ENCODE measurements at regions of chr1 and their contacts with region 1.

Region 1: DNA sequence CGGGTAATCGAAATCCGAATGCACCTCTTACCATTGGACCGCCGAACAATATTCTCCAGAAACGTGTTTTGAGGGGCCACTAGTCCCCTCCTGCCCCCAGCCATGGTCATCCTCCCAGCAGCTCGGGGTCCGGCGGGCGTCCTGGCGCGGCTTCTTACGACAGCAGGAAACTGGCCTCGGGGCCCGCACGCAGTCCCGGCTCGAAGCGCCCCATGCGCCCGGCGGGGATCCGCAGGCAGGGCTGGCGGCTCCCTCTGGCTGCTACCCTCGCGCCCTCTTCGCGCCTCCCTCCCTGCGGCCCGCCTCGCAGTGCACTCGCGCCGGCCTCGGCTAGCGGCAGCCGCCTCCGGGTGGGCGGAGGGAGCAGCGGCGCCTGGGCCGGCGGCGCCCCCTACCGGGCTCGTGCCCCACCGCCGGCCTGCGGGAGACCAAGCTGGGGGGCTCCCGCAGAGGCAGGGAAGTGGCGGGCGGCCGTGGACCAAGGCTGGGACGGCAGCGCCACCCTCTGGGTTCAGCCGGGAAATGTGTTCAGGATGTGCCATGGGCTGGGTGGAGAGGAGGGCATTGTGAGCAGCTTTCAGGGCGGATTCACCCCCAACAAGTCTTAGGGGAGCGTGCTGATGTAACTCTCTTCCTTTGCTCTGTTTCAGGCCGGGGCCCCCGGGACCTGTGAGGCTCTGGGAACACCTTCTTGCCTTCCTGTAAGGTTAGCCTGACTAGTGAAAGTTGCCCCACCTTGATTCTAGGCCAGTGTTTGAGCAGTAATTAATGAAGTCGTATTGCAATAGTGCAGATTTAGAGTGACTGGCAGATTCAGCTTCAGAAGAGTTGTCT is at the start of gene KCNH1:
- DNase-seq: peak; percentile 78
- ATAC-seq: peak; percentile 97 to 99
- total RNA-seq, gene KCNH1: 0.15 TPM in 1 of 2 donors, not detected in the other

Region 2: GRCh38 chr1:210400043-210400840 is 733.8 kb before region 1 on chr1:
- intact Hi-C with region 1: loop called in 1 of 2 experiments (anchors 10 kb)
- DNase-seq: peak; percentile 49
- ATAC-seq: peak; percentile 93 to 96

Region 3: DNA sequence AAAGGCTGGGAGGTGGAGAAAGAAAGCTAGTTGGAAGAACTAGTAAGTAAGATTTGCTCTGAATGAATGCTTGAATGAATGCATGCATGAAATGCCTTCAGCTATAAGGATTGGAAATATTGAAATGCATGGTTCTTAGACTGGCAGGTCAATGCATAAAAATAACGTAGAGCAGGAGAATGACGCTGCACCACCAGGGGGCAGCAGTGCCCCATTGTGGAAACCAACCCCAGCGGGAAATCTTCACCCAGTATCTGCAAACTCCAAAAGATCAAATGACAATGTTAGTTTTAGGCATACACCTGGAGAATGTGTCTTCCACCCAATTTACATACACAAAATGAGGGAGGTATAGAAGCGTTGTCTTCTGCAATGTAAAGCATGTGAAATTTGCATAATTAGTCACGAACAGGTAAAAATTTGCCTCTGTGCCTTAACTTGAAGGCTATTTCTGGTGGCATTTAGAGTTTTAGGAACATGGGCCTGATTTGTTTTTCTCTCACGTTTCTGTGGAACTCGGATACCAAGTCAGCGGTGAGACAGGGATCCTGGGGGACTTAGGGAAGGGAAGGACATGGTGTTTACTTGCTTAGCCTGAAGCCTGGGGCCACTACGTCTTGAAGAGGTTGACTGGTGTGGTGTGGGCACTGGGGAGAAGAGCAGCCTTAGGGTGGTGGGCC is 726.7 kb before region 1 on chr1:
- intact Hi-C with region 1: loop called (anchors 2 to 10 kb)
- DNase-seq: peak; percentile 71
- ATAC-seq: peak; percentile 61 to 66

Region 4: DNA sequence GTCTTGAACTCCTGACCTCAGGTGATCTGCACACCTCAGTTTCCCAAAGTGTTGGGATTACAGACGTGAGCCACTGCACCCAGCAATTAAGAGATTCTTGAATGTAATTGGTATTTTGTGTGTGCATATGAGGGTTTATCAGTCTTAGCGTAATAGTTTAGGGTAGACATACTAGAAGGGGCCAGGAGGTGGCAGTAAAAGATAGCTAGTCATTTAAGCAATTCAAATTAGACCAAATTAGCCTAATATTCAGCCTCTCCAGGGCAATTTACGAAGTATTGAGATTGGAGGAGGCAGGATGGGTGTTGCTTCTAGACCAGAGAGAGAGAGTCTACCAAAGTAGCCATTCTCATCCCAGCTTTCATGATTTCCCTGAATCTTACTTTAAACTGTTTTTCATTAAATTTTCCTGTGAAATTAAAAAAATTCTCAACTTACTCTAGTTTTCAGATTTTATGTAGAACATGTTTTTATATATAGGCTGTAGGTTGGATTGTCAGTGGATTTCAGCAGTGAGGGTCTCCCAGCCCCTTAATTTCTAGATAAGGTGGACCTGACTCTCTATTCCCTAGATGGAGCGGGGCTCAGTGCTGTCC is 685.7 kb before region 1 on chr1:
- intact Hi-C with region 1: loop called (anchors 2 to 5 kb)
- DNase-seq: no peak
- ATAC-seq: peak; percentile 41 to 53

Region 5: GRCh38 chr1:210584439-210585113 is 549.5 kb before region 1 on chr1:
- intact Hi-C with region 1: loop called (anchors 2 to 5 kb)
- DNase-seq: peak; percentile 83
- ATAC-seq: peak; percentile 86 to 89

Region 6: GRCh38 chr1:210711825-210712612 is 422.0 kb before region 1 on chr1:
- intact Hi-C with region 1: loop called in 1 of 2 experiments (anchors 5 kb)
- DNase-seq: peak; percentile 38
- ATAC-seq: peak; percentile 48 to 72

Region 7: DNA sequence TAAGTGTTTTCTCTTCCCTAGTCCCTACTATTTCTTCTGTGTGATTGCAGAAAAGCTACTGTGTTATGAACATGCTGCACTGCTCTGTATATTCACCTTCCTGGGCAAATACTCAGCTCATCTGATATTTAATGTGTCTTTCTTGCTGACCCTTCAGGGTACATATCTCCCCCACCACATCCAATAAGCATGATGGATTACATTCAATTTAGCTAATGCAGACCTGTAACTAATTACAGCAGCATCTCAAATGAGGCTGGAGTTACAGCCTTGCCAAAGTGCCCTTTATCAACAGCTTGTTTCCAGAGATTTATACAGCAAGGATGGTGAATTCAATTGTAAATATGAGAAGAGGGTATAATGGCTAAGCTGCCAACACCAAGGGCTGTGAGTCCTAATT is 144.1 kb before region 1 on chr1:
- intact Hi-C with region 1: no loop called
- DNase-seq: no peak
- ATAC-seq: no peak